SK-N-SH (cell line): ENCODE measurements at regions of chr15 and their contacts with region 1.

Region 1: DNA sequence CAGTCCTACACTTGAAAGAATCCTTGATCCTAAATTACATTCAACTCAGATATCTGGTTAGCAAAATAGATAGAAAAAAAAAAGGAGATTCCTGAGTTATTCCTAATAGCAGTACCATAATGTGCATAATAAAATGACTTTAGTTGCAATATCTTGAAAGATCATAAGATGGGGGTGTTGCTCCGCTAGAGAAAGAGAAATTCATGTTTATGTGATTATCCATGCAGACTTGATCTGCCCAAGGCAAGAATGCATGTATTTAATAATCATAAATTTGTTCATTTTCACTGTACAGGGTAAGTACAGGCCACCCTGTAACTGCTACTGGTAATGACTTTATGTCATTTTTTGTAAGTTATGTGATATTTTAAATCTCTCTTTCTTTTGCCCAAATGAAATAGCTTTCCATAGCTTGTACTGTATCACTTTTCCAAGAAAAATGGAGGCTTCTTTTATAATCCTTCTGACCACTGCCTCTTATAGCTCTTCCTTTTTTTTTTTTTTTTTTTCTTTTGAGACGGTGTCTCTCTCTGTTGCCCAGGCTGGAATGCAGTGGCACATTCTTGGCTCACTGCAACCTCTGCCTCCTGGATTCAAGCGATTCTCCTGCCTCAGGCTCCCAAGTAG is 84.6 kb downstream of the HCN4 start:
- DNase-seq: peak; percentile 56
- H3K4me3 ChIP-seq: no peak overlapping the region
- H3K27ac ChIP-seq: peak overlapping the region; percentile 26 to 37; a peak in 3 of 4 replicates
- H3K4me1 ChIP-seq: peaks cover 5 to 11% of the 10 kb centered on the region in 2 experiments
- H3K27me3 ChIP-seq: no peaks in the 10 kb centered on the region
- CTCF ChIP-seq: peak; percentile 65
- EP300 ChIP-seq: peak in 1 of 2 experiments; percentile 39; a peak in 1 of 4 replicates
- RAD21 ChIP-seq: peak; percentile 80

Region 2: GRCh38 chr15:73265536-73266153 is 18.6 kb before region 1 on chr15:
- CTCF ChIA-PET with region 1: interaction called, 99 read pairs
- POLR2A ChIA-PET with region 1: no interaction called
- DNase-seq: peak; percentile 53
- H3K4me3 ChIP-seq: no peak overlapping the region
- H3K27ac ChIP-seq: no peak overlapping the region
- H3K4me1 ChIP-seq: no peaks in the 10 kb centered on the region
- H3K27me3 ChIP-seq: no peaks in the 10 kb centered on the region
- CTCF ChIP-seq: peak; percentile 71
- EP300 ChIP-seq: no peak
- RAD21 ChIP-seq: peak; percentile 58

Region 3: DNA sequence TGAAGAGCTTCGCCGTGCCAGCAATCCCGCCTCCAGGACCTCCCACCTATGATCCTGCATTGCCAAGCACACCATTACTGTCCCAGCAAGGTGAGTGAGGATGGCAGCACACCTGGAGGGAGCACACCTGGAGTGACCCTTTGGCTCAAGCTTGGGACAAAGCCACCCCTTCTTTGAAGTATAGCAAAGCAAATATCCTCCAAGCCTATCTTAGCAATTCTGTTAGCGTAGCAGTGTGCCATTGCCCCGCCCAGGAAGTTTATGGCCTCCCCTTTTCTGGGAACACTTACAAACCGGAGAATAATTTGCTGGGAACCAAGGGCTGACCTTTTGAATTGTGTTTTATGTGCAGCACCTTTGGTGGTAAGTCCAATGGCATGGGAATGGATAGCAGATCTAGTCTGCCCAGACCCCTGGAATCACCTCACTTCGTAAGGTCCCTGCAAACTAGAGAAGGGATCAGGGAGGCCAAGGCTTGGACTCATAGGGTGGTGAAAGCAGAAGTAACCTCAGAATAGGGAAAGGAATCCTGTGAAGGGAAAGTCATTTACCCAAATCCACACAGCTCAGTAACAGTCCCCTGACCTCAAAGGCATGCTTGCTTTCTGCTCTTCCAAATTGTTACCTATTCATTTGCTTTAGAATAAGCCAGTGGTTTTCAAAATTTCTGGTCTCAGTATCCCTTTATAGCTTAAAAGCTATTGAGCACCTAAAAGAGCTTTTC is 14.5 kb after region 1 on chr15:
- CTCF ChIA-PET with region 1: interaction called, 10 read pairs
- POLR2A ChIA-PET with region 1: no interaction called
- DNase-seq: no peak
- H3K4me3 ChIP-seq: no peak overlapping the region
- H3K27ac ChIP-seq: no peak overlapping the region
- H3K4me1 ChIP-seq: no peaks in the 10 kb centered on the region
- H3K27me3 ChIP-seq: no peaks in the 10 kb centered on the region
- CTCF ChIP-seq: no peak
- EP300 ChIP-seq: no peak
- RAD21 ChIP-seq: no peak